ENCODE measurements at regions of chr2 and their contacts with region 1.

Region 1: DNA sequence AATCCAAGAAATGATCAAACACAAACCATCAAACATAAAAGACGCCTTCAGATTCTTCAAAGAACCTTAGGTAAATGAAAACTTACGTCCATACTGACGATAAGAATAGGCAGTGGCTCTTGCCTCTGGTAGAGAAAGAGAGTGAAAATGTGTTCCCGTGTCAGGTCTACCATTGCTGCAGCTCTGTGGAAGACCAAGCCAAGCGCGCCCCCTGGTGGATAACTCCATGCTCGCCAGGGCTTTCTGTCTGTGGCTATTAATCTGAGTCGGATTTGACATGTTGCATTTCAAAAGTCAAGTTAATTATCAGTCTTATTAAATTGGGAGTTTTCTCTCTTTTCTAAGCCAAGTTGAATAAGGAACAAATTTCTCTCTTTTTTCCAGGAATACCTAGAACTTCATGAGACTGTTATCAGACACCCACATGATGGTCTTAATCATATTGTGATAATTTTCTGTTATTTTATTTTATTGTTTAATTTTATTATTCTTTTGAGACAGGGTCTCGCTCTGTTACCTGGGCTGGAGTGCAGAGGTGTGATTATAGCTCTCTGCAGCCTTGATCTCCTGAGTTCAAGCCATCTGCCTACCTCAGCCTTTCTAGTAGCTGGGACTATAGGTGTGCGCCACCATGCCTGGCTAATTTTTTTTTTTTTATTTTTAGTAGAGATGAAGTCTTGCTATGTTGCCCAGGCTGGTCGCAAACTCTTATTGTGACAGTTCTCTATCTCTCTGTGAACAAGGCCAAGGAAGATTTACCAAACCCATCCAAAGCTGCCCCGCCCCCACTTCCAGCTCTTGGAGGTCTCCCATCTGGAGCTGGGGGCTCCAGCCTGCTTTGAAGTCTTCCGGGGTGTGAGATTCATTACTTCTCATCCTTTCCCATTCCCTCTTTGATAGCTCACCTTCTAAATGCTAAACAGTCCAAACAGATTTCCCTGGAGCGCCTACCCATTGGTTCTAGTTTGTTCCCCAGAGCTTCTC is 15.8 kb upstream of the ZAP70 start:
- DNase-seq: peak; percentile 84
- H3K4me3 Mint-ChIP-seq: no peak overlapping the region
- H3K27ac Mint-ChIP-seq: no peak overlapping the region
- H3K4me1 Mint-ChIP-seq: peaks cover 14% of the 10 kb centered on the region
- H3K27me3 Mint-ChIP-seq: no peaks in the 10 kb centered on the region
- CTCF ChIP-seq: peak; percentile 92

Region 2: DNA sequence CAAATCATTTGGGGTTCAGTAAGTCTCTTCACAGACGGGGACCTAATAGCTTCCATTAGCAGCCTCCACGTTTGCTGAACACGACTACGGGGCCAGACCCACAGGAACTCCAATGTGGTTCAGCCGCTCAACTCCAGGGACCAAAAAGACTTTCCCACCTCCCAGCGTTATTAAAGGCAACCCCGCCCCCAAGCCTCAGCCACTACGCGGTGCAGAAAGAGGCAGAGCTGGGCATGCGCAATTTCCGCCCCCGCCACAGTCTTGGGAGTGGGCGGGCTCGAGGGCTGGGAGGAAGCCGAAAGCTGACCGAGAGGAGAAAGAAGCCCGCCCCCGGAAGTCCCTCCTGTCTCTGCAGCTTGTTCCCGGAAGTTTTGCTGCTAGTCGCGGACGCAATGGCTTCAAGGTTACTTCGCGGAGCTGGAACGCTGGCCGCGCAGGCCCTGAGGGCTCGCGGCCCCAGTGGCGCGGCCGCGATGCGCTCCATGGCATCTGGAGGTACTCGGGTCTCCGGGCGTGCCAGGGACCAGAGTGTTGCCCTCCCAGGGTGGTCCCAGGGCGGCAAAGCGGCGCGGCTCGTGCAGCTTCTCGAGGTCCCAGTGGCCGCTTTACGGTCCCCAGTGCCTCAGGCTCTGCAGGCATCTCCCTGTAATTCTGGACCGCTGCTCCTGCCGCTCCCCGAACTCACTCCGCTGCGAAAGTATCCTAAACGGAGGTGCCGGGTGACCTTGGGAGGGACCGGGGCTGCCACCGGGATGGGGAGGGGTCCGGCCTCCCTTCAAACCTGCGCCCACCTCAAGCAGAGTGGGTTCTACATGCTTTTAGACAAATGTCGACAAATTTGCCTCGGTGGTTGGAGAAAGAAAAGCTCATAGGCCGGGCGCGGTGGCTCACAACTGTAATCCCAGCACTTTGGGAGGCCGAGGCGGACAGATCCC is 51.6 kb before region 1 on chr2 and contains the start of gene COX5B:
- CTCF ChIA-PET with region 1: interaction called, 11 read pairs
- POLR2A ChIA-PET with region 1: interaction called, 10 read pairs
- intact Hi-C with region 1: no loop called
- DNase-seq: peak; percentile 97
- H3K4me3 Mint-ChIP-seq: peak within 1 kb of the TSS; percentile 96
- H3K27ac Mint-ChIP-seq: peak within 1 kb of the TSS; percentile 90
- H3K4me1 Mint-ChIP-seq: peaks cover 12% of the 10 kb centered on the region
- H3K27me3 Mint-ChIP-seq: no peaks in the 10 kb centered on the region
- CTCF ChIP-seq: no peak
- total RNA-seq, gene COX5B: 272 and 284 TPM in 2 replicates

Region 3: DNA sequence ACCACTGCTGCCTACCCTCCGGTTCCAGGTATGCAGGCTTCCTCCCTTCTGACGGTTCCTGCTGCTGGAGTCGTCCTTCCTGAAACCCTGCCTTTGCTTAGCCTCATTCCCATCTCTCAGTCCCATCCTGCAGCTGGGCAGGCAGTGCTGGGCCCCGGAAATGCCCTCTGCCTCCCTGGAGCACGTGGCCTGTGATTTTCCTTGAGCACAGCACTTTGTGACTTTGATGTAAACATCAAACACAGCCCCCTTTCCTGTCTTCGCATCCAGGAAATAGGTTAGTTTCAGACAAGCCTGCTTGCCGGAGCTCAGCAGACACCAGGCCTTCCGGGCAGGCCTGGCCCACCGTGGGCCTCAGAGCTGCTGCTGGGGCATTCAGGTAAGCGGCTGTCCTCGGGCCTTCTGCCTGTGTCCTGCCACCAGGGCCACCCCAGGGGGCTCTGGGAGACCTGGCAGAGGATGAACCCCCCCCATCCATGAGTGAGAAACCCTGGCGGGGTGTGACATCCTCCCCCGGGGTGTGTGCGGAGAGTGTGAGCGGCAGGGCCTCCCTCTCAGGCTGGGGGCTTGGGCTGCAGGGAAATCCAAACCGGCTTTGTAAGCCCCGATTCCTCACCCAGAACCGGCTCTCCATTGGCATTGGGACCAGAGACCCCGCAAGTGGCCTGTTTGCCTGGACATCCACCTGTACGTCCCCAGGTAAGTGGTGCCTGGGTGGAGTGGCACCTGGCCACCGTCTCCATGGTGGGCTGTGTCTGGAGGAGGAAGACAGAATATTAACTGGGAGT is 15.9 kb after region 1 on chr2 and contains the start of gene ZAP70:
- CTCF ChIA-PET with region 1: interaction called, 12 read pairs
- POLR2A ChIA-PET with region 1: interaction called, 3 read pairs
- intact Hi-C with region 1: no loop called
- DNase-seq: no peak
- H3K4me3 Mint-ChIP-seq: no peak within 1 kb of the TSS
- H3K27ac Mint-ChIP-seq: peak within 1 kb of the TSS; percentile 32
- H3K4me1 Mint-ChIP-seq: no peaks in the 10 kb centered on the region
- H3K27me3 Mint-ChIP-seq: no peaks in the 10 kb centered on the region
- CTCF ChIP-seq: no peak
- total RNA-seq, gene ZAP70: not detected in 2 replicates

Region 4: DNA sequence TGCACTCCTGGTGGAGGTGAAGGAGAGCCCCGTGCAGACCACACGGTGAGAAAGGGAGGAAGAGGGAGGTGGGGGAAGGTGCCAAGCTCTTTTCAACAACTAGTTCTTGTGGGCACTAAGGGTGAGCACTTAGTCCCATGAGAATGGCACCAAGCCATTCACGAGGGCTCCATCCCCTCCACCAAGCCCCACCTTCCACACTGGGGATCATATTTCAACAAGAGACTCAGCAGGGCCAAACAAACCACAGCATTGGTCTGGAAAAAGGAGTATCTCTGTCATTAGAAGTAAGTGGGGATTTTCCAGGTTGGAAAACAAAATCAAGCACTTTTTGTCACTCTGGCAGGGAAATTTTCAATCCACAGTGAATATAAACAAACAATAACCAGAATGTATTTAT is 54.2 kb after region 1 on chr2:
- CTCF ChIA-PET with region 1: interaction called, 40 read pairs
- POLR2A ChIA-PET with region 1: no interaction called
- intact Hi-C with region 1: loop called (anchors 1 kb)
- DNase-seq: peak; percentile 53
- H3K4me3 Mint-ChIP-seq: no peak overlapping the region
- H3K27ac Mint-ChIP-seq: peak overlapping the region; percentile 30
- H3K4me1 Mint-ChIP-seq: peaks cover 17% of the 10 kb centered on the region
- H3K27me3 Mint-ChIP-seq: no peaks in the 10 kb centered on the region
- CTCF ChIP-seq: no peak

Region 5: GRCh38 chr2:98188351-98189049 is 491.0 kb after region 1 on chr2:
- CTCF ChIA-PET with region 1: interaction called, 71 read pairs
- POLR2A ChIA-PET with region 1: no interaction called
- intact Hi-C with region 1: no loop called
- DNase-seq: peak; percentile 44
- H3K4me3 Mint-ChIP-seq: no peak overlapping the region
- H3K27ac Mint-ChIP-seq: no peak overlapping the region
- H3K4me1 Mint-ChIP-seq: no peaks in the 10 kb centered on the region
- H3K27me3 Mint-ChIP-seq: no peaks in the 10 kb centered on the region
- CTCF ChIP-seq: peak; percentile 32

Region 6: GRCh38 chr2:98385050-98385699 is 687.6 kb after region 1 on chr2:
- CTCF ChIA-PET with region 1: interaction called, 97 read pairs
- POLR2A ChIA-PET with region 1: interaction called, 3 read pairs
- intact Hi-C with region 1: loop called (anchors 1 kb)
- DNase-seq: peak; percentile 84
- H3K4me3 Mint-ChIP-seq: no peak overlapping the region
- H3K27ac Mint-ChIP-seq: no peak overlapping the region
- H3K4me1 Mint-ChIP-seq: peaks cover 4% of the 10 kb centered on the region
- H3K27me3 Mint-ChIP-seq: peaks cover 40% of the 10 kb centered on the region
- CTCF ChIP-seq: peak; percentile 95

Measured in MCF 10A (cell line).